Activated T-helper 1 cell treated with anti-CD3 and anti-CD28 coated beads, Interleukin-12 subunit alpha, Interleukin-12 subunit beta, Interleukin-2, Interleukin-4 antibody, amounts not matched to agents 30 ng/mL and 10 ng/mL and 1 ng/mL, durations not matched to agents 14 hours and 24 hours and 36 hours (primary cell): ENCODE measurements at regions of chr7 and their contacts with region 1.

Region 1: DNA sequence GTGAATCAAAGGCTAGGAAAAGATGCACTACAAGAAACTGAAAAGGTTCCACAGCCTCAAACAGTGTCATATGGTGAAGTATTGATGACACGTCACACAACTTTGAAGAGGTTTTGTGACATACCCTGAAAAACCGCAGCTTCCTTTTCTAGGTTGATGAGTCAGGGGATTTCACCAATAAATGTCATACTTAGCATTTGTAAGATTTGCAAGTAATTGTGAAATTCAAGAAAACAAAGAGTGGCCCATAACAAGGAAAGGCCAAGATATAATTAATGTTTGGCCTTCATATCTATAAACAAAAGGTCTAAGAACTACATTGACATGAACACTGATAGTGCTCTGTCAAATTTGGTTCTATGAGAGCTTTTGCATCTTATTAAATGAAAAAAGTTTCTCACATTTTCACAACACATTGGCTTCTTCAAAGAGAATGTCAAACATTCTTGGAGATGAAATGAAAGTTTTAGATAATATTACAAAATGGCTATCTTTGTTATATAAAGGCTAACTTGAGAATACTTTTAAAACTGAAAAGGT is 62.0 kb upstream of the NAMPT start:
- DNase-seq: peak; percentile 76
- H3K4me3 Mint-ChIP-seq: peak overlapping the region; percentile 63
- H3K27ac Mint-ChIP-seq: peak overlapping the region; percentile 99
- H3K4me1 Mint-ChIP-seq: peaks cover 53% of the 10 kb centered on the region
- H3K27me3 Mint-ChIP-seq: peaks cover 1% of the 10 kb centered on the region

Region 2: GRCh38 chr7:105013221-105013815 is 1333.4 kb before region 1 on chr7:
- intact Hi-C with region 1: loop called (anchors 2 kb)
- DNase-seq: peak; percentile 92
- H3K4me3 Mint-ChIP-seq: peak overlapping the region; percentile 99
- H3K27ac Mint-ChIP-seq: peak overlapping the region; percentile 96
- H3K4me1 Mint-ChIP-seq: peaks cover 43% of the 10 kb centered on the region
- H3K27me3 Mint-ChIP-seq: peaks cover 3% of the 10 kb centered on the region

Region 3: GRCh38 chr7:106255246-106255645 is 91.5 kb before region 1 on chr7:
- intact Hi-C with region 1: loop called (anchors 1 kb)
- DNase-seq: no peak
- H3K4me3 Mint-ChIP-seq: no peak overlapping the region
- H3K27ac Mint-ChIP-seq: peak overlapping the region; percentile 44
- H3K4me1 Mint-ChIP-seq: peaks cover 46% of the 10 kb centered on the region
- H3K27me3 Mint-ChIP-seq: no peaks in the 10 kb centered on the region

Region 4: GRCh38 chr7:106392590-106392989 is 45.8 kb after region 1 on chr7:
- intact Hi-C with region 1: no loop called
- DNase-seq: no peak
- H3K4me3 Mint-ChIP-seq: no peak overlapping the region
- H3K27ac Mint-ChIP-seq: no peak overlapping the region
- H3K4me1 Mint-ChIP-seq: peaks cover 5% of the 10 kb centered on the region
- H3K27me3 Mint-ChIP-seq: peaks cover 20% of the 10 kb centered on the region

Region 5: GRCh38 chr7:106405697-106406141 is 59.0 kb after region 1 on chr7:
- intact Hi-C with region 1: loop called (anchors 1 kb)
- DNase-seq: no peak
- H3K4me3 Mint-ChIP-seq: no peak overlapping the region
- H3K27ac Mint-ChIP-seq: peak overlapping the region; percentile 30
- H3K4me1 Mint-ChIP-seq: peaks cover 23% of the 10 kb centered on the region
- H3K27me3 Mint-ChIP-seq: peaks cover 23% of the 10 kb centered on the region

Region 6: DNA sequence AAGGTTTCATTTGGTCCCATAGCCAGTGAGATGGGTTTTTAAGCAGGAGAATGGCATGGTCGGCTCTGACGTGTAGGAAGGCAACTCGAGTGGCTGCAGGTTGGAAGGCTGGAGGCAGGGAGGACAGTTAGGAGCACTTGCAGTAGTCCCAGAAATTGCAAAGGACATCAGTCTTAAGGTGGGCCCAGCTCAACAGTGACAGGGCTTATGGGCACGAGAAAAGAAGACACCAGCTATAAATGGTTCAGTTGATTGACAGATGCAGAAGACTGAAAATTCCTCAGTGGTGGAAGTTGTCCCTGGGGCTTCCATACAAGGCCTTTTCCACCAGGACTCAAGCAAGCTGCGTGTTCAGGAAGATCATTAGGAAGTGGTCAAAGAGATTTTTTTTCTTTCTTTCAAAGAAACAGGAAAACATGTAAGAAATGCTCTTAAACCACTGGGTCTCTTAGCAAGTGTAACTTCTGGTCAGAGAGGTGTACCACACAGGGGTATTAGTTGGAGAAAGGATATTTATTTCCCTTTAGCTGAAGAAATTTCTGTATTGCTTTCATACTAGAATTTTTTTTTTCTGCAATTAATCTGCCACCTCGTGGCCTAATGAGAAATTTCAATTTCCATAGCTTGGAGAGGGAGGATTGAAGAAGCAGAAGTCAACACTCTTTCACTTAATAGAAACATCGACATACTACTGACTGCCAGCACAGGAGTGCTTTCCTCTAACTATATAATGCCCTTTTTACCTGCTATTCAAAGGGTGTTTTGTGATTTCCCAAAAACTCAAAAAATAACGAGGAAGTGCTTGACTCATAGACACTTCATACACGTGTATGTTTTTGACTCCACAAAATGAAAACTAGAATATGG is 115.5 kb after region 1 on chr7:
- intact Hi-C with region 1: loop called (anchors 1 kb)
- DNase-seq: no peak
- H3K4me3 Mint-ChIP-seq: no peak overlapping the region
- H3K27ac Mint-ChIP-seq: no peak overlapping the region
- H3K4me1 Mint-ChIP-seq: peaks cover 30% of the 10 kb centered on the region
- H3K27me3 Mint-ChIP-seq: no peaks in the 10 kb centered on the region

Region 7: DNA sequence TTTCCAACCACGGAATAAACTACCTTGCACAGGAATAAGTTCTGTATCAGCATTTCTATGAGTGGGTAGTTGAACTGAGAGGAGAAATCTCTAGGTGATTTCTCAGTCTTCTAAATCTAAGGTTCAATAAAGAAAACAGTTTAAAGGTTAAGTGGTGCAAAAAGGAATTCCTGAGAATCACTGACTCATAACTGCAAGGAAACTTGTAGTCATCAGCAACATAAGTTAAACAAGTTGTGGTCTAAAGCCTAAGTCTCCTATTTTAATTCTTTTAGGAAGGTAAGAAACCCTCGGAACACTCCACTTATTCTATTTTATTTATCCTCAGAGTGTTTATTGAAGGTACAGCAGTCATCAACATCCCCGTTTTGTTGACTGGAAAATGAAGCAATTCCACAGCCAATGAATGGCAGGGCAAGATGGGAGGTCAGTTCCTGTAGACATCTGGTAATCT is 425.9 kb after region 1 on chr7:
- intact Hi-C with region 1: loop called (anchors 1 kb)
- DNase-seq: no peak
- H3K4me3 Mint-ChIP-seq: peak overlapping the region; percentile 47
- H3K27ac Mint-ChIP-seq: peak overlapping the region; percentile 98
- H3K4me1 Mint-ChIP-seq: peaks cover 63% of the 10 kb centered on the region
- H3K27me3 Mint-ChIP-seq: no peaks in the 10 kb centered on the region